ENCODE measurements at regions of chr9 and their contacts with region 1.

Region 1: GRCh38 chr9:35967042-35967441 is 9.1 kb upstream of the OR2S2 start:
- DNase-seq: no peak
- H3K4me3 ChIP-seq: no peak overlapping the region
- H3K27ac ChIP-seq: peak overlapping the region; percentile 13
- H3K4me1 ChIP-seq: peaks cover 6% of the 10 kb centered on the region
- H3K27me3 ChIP-seq: no peaks in the 10 kb centered on the region
- CTCF ChIP-seq: no peak

Region 2: GRCh38 chr9:36008774-36009300 is 41.8 kb after region 1 on chr9:
- intact Hi-C with region 1: loop called (anchors 5 kb)
- DNase-seq: peak; percentile 78
- H3K4me3 ChIP-seq: no peak overlapping the region
- H3K27ac ChIP-seq: no peak overlapping the region
- H3K4me1 ChIP-seq: peaks cover 14% of the 10 kb centered on the region
- H3K27me3 ChIP-seq: no peaks in the 10 kb centered on the region
- CTCF ChIP-seq: peak; percentile 98

Measured in colonic mucosa (tissue), 4 donors.